Naive thymus-derived CD8-positive, alpha-beta T cell (primary cell): ENCODE measurements at regions of chr9 and their contacts with region 1.

Region 1: DNA sequence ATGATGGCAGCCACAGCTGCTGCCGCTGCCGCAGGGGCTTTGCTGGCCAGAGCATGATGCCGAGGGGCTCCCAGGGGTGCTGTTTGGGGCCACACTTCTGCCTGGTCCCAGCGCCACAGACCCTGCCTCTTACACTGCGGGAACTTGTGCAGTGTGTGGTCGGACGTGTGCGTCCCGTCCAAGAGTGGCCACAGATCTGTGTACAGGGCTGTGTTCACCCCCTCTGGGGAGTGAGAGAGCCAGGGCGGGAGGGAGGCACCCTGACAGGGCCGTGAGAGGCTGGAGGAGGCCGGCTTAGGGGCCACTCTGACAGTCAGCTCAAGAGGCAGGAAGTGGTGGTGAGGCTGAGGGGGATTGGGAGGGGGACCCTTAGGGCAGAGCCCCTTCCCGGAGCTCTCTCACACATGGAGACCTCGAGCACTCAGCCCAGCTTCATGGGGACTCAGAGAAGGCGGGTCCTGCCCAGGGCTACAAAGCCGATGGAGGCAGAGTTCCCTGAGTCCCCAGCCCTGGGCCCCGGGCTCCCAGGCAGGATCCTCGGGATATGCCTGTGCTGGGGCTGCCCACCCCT is 13.1 kb upstream of the CARD19 start:
- DNase-seq: peak in 1 of 10 donors; percentile 61
- ATAC-seq: peak; percentile 47 to 53
- H3K4me3 Mint-ChIP-seq: peak overlapping the region in 5 of 10 donors; percentile 10 to 81 (median 41)
- H3K27ac Mint-ChIP-seq: peak overlapping the region; percentile 46 to 96 (median 90)
- H3K4me1 Mint-ChIP-seq: peaks cover 9 to 43% (median 21%) of the 10 kb centered on the region in 4 donors
- H3K27me3 Mint-ChIP-seq: no peaks in the 10 kb centered on the region

Region 2: DNA sequence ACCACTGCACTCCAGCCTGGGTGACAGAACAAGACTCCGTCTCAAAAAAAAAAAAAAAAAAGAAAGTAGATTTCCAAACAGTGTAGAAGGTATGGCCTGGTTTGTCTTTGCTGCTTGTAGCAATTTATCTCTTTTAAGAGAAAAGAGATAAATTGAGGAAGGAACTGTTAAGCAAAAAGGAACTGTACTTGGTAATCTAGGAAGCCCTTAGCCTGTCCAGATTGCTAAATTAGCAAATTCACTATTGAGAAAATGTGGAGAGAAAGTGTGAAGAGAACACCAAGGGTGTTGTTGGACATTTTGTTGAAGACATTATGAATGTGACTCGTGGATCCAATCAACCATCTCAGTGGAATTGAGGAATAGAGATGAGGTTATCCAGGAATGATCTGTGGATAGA is 37.4 kb before region 1 on chr9:
- POLR2A ChIA-PET with region 1: no interaction called
- DNase-seq: no peak
- ATAC-seq: no peak
- H3K4me3 Mint-ChIP-seq: peak overlapping the region in 1 of 10 donors; percentile 50
- H3K27ac Mint-ChIP-seq: peak overlapping the region in 6 of 10 donors; percentile 6 to 89 (median 57)
- H3K4me1 Mint-ChIP-seq: peaks cover 36 to 69% (median 55%) of the 10 kb centered on the region in 4 donors
- H3K27me3 Mint-ChIP-seq: peaks cover 0 to 1% (median 0%) of the 10 kb centered on the region in 5 donors

Region 3: DNA sequence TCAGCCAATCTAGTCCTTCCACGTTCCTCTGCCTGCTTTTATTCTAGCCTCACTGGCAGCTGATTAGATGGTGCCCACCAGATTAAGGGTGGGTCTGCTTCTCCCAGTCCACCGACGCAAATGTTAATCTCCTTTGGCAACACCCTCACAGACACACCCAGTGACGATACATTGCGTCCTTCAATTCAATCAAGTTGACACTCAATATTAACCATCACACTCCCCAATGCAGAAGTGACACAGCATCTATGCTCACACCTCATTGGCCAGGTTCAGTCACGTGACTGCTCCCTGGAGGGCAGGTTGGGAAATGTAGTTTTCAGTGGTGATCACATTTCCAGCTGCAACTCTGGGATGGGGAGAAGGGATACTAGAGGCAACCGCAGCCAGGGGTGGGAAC is 11.5 kb before region 1 on chr9:
- POLR2A ChIA-PET with region 1: interaction called, 221 read pairs
- DNase-seq: no peak
- ATAC-seq: peak in 1 of 2 donors; percentile 36
- H3K4me3 Mint-ChIP-seq: peak overlapping the region in 3 of 10 donors; percentile 15 to 37 (median 29)
- H3K27ac Mint-ChIP-seq: peak overlapping the region in 8 of 10 donors; percentile 28 to 93 (median 86)
- H3K4me1 Mint-ChIP-seq: peaks cover 28 to 90% (median 75%) of the 10 kb centered on the region in 4 donors
- H3K27me3 Mint-ChIP-seq: no peaks in the 10 kb centered on the region